ENCODE measurements at regions of chr10 and their contacts with region 1.

Region 1: GRCh38 chr10:71708301-71708703 is 11.3 kb downstream of the C10orf105 start:
- DNase-seq: peak; percentile 46 to 86 (median 62)
- ATAC-seq: peak in 3 of 4 donors; percentile 50 to 62 (median 52)
- H3K4me3 ChIP-seq: no peak overlapping the region
- H3K27ac ChIP-seq: no peak overlapping the region
- H3K4me1 ChIP-seq: peaks cover 0 to 30% (median 18%) of the 10 kb centered on the region in 12 donors
- H3K27me3 ChIP-seq: no peaks in the 10 kb centered on the region
- CTCF ChIP-seq: peak; percentile 79 to 90 (median 87)
- POLR2A ChIP-seq: no peak

Region 2: DNA sequence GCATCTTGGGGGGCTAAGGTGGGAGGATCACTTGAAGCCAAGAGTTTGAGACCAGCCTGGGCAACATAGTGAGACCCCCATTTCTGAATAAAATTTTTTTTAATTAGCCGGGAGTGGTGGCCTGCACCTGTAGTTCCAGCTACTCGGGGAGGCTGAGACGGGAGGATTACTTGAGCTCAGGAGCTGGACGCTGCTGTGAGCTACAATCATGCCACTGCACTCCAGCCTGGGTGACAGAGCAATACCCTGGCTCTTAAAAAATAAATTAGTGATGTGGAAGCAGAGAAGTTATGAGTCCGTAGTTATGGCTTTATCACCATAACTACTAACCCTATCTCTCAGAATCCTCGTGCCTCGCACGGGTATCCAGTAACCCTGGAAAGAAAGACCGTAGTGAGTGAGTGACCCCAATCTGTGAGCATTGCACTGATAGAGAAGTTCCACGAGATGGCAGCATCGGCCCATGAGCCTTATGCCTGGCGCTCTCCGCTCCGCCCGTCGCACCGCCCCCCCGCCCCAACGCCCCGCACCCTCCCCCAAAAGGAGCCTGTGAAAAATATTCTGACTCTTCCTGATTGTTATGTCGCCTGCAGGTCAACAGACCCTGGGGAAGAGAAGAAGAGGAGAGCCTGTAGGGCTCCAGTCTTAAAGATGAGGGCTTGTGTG is 394.1 kb before region 1 on chr10:
- intact Hi-C with region 1: loop called in 7 of 10 experiments (anchors 2 to 10 kb)
- DNase-seq: peak in 4 of 5 donors; percentile 44 to 66 (median 50)
- ATAC-seq: peak; percentile 54 to 68 (median 66)
- H3K4me3 ChIP-seq: peak overlapping the region in 4 of 12 donors; percentile 14 to 36 (median 26)
- H3K27ac ChIP-seq: peak overlapping the region in 3 of 12 donors; percentile 21 to 57 (median 30)
- H3K4me1 ChIP-seq: peaks cover 0 to 34% (median 18%) of the 10 kb centered on the region in 12 donors
- H3K27me3 ChIP-seq: no peaks in the 10 kb centered on the region
- CTCF ChIP-seq: peak; percentile 74 to 96 (median 86)
- POLR2A ChIP-seq: no peak

Region 3: DNA sequence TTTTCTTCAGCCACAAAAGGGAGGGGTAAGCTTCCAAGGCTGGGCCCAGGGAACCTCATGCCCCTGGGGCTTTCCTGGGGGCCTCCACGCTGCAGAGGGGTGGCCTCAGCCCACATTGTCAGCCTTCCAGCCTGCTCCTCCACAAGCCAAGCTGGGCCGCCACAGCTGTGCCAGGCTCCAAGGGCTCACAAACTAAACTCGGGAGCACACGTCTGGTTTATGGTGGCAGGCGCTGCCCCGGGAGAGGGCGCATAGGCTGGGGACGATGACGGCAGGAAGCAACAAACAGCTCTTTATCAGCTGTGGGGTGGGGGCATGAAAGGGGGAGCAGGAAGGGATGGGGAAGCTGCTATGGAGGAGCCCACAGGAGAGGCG is 317.9 kb before region 1 on chr10:
- intact Hi-C with region 1: loop called in 9 of 10 experiments (anchors 2 to 10 kb)
- DNase-seq: no peak
- ATAC-seq: peak in 1 of 4 donors; percentile 24
- H3K4me3 ChIP-seq: no peak overlapping the region
- H3K27ac ChIP-seq: no peak overlapping the region
- H3K4me1 ChIP-seq: no peaks in the 10 kb centered on the region
- H3K27me3 ChIP-seq: peaks cover 0 to 16% (median 0%) of the 10 kb centered on the region in 9 donors
- CTCF ChIP-seq: no peak
- POLR2A ChIP-seq: no peak

Region 4: DNA sequence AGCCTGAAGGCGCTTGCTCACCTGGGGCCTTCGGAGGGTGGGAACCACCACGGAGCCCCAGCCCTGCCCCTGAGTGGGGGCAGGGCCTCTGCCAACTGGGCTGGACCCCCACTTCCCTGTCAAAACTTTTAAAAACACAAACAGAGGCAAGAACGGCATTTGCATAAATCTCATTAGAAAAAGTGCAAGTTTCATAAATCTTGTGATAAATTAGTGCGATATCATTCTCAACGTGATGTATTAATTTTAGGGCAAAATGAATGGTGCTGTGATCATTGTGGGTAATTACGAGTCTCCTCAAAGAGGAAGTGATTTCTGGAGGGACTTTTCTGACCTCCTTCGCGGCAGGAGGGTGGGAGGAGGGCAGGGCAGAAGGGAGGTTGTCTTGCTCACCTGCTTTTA is 213.3 kb before region 1 on chr10:
- intact Hi-C with region 1: loop called in 1 of 10 experiments (anchors 10 kb)
- DNase-seq: no peak
- ATAC-seq: no peak
- H3K4me3 ChIP-seq: no peak overlapping the region
- H3K27ac ChIP-seq: no peak overlapping the region
- H3K4me1 ChIP-seq: peaks cover 0 to 10% (median 0%) of the 10 kb centered on the region in 12 donors
- H3K27me3 ChIP-seq: no peaks in the 10 kb centered on the region
- CTCF ChIP-seq: no peak
- POLR2A ChIP-seq: no peak

Region 5: GRCh38 chr10:71608819-71609768 is 99.2 kb before region 1 on chr10:
- intact Hi-C with region 1: loop called in 4 of 10 experiments (anchors 5 to 10 kb)
- DNase-seq: peak; percentile 72 to 87 (median 81)
- ATAC-seq: peak in 3 of 4 donors; percentile 22 to 68 (median 58)
- H3K4me3 ChIP-seq: no peak overlapping the region
- H3K27ac ChIP-seq: no peak overlapping the region
- H3K4me1 ChIP-seq: peaks cover 3 to 22% (median 17%) of the 10 kb centered on the region in 12 donors
- H3K27me3 ChIP-seq: no peaks in the 10 kb centered on the region
- CTCF ChIP-seq: peak; percentile 60 to 86 (median 82)
- POLR2A ChIP-seq: no peak

Region 6: GRCh38 chr10:71671994-71672946 is 36.0 kb before region 1 on chr10:
- intact Hi-C with region 1: no loop called
- DNase-seq: no peak
- ATAC-seq: peak in 1 of 4 donors; percentile 29
- H3K4me3 ChIP-seq: no peak overlapping the region
- H3K27ac ChIP-seq: no peak overlapping the region
- H3K4me1 ChIP-seq: no peaks in the 10 kb centered on the region
- H3K27me3 ChIP-seq: no peaks in the 10 kb centered on the region
- CTCF ChIP-seq: no peak
- POLR2A ChIP-seq: no peak

Region 7: DNA sequence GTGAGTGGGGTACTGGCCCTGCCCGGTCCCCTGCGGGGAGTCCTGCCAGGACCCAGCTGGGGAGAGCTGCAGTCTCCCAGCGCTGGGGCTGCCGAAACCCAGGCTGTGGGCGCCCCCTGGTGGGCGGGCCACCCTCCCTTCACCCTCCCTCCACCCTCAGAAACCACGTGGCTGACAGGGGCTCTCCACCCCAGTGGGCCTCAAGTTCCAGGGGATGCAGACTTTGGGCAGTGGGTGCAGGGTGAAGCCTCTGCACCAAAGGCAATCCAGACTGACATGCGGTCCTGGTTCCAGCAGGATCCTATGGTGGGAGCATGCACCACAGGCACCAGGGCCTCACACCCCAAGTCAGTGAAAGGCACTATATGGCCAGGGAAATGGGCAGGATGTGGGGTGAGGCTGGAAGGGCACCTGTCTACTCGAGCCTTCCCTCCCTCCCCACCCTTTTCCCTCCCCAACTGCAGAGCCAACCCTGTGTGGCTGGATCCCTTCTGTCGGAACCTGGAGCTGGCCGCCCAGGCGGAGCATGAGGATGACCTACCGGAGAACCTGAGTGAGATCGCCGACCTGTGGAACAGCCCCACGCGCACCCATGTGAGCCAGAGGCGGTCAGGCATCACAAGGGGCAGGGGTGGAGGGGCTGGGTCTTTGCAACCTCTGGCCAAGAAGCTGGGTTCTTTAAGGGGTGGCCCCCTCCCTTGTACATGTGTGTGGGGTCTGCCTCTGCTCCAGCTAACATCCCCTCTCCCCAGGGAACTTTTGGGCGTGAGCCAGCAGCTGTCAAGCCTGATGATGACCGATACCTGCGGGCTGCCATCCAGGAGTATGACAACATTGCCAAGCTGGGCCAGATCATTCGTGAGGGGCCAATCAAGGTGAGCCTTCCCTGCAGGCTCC is 104.0 kb after region 1 on chr10:
- intact Hi-C with region 1: loop called in 3 of 10 experiments (anchors 2 to 5 kb)
- DNase-seq: peak; percentile 57 to 87 (median 68)
- ATAC-seq: peak; percentile 66 to 87 (median 84)
- H3K4me3 ChIP-seq: no peak overlapping the region
- H3K27ac ChIP-seq: no peak overlapping the region
- H3K4me1 ChIP-seq: peaks cover 0 to 30% (median 10%) of the 10 kb centered on the region in 12 donors
- H3K27me3 ChIP-seq: peaks cover 0 to 9% (median 0%) of the 10 kb centered on the region in 9 donors
- CTCF ChIP-seq: peak; percentile 54 to 89 (median 84)
- POLR2A ChIP-seq: no peak